CD4-positive, alpha-beta T cell (primary cell): ENCODE measurements at regions of chr4 and their contacts with region 1.

Region 1: DNA sequence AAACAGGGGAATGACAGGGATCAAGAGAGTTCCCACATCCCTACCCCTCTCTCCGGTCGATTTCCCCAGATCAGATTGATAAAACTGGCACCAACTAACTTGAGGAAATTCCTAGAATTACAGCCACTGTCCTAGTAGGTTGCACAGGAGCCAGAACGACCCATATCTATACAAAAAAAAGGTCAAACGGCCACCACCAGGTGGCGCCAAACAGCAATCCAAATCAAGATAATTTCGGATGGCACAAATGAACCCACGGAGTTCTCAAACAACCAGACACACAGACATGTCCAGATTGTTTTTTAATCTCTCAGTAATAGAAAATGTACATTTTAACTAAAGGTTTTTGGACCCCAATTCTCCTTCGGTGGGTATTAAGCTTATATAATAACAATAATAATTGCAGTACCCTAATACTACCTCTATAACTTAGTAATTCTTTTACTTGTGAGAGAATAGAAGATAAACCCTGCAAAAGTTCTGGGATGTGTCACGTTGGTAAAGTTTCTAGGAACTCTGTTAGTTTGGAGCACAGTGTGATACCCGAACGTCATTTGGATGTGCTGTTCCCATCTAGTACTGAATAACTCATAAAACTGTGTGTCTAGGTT is 212.6 kb downstream of the SPOCK3 start:
- DNase-seq: peak in 13 of 14 experiments; percentile 0 to 65 (median 34)
- ATAC-seq: no peak
- H3K4me3 ChIP-seq: no peak overlapping the region
- H3K4me3 Mint-ChIP-seq: no peak overlapping the region
- H3K27ac ChIP-seq: no peak overlapping the region
- H3K27ac Mint-ChIP-seq: no peak overlapping the region
- H3K4me1 ChIP-seq: no peaks in the 10 kb centered on the region
- H3K4me1 Mint-ChIP-seq: no peaks in the 10 kb centered on the region
- H3K27me3 ChIP-seq: no peaks in the 10 kb centered on the region
- H3K27me3 Mint-ChIP-seq: no peaks in the 10 kb centered on the region
- CTCF ChIP-seq: peak; percentile 77

Region 2: GRCh38 chr4:168076989-168077725 is 1055.5 kb after region 1 on chr4:
- CTCF ChIA-PET with region 1: no interaction called
- POLR2A ChIA-PET with region 1: no interaction called
- intact Hi-C with region 1: loop called (anchors 5 to 10 kb)
- DNase-seq: peak in 7 of 14 experiments; percentile 1 to 32 (median 14)
- ATAC-seq: no peak
- H3K4me3 ChIP-seq: no peak overlapping the region
- H3K4me3 Mint-ChIP-seq: no peak overlapping the region
- H3K27ac ChIP-seq: no peak overlapping the region
- H3K27ac Mint-ChIP-seq: no peak overlapping the region
- H3K4me1 ChIP-seq: no peaks in the 10 kb centered on the region
- H3K4me1 Mint-ChIP-seq: no peaks in the 10 kb centered on the region
- H3K27me3 ChIP-seq: no peaks in the 10 kb centered on the region
- H3K27me3 Mint-ChIP-seq: peaks cover 4% of the 10 kb centered on the region
- CTCF ChIP-seq: peak; percentile 59

Region 3: DNA sequence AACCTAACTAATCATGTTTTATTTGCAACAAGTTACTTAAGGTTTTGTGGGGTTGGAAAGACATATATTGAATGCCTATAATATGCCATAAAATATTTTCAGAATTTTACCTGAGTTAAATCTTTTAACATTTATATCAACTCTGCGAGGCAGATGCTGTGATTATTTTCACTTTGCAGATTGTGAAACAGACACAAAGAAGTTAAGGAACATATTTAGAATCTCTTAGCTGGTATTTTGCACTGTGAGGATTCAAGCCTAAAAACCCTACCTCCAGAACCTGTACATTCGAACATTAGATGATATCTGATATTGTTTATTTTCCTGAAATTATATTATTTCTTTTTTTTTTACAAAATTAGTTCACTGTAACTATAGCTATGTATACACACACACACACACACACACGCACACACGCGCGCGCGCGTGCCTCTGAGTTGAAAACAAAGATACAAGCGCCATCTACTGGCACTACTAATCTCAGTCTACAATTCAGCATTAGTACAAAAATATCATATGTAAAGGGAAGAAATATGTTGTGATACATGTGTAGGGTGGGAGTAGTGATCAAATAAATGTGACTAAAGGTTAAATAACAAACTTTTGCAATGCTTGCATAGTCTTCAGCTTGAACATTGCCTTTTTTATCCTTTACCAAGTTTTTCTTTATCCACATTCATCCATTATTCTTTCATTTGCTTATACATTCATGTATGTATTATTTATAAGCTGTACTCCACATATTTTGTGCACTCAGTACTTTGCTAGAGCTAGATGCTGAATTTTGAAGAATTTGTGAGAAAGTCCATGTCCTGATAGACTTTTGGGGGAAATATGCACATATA is 1132.2 kb after region 1 on chr4:
- CTCF ChIA-PET with region 1: no interaction called
- POLR2A ChIA-PET with region 1: no interaction called
- intact Hi-C with region 1: loop called in 1 of 2 experiments (anchors 5 kb)
- DNase-seq: peak; percentile 28 to 72 (median 55)
- ATAC-seq: peak; percentile 49
- H3K4me3 ChIP-seq: no peak overlapping the region
- H3K4me3 Mint-ChIP-seq: no peak overlapping the region
- H3K27ac ChIP-seq: no peak overlapping the region
- H3K27ac Mint-ChIP-seq: no peak overlapping the region
- H3K4me1 ChIP-seq: no peaks in the 10 kb centered on the region
- H3K4me1 Mint-ChIP-seq: peaks cover 9% of the 10 kb centered on the region
- H3K27me3 ChIP-seq: no peaks in the 10 kb centered on the region
- H3K27me3 Mint-ChIP-seq: no peaks in the 10 kb centered on the region
- CTCF ChIP-seq: peak; percentile 81

Region 4: GRCh38 chr4:168551945-168552695 is 1530.5 kb after region 1 on chr4:
- CTCF ChIA-PET with region 1: no interaction called
- POLR2A ChIA-PET with region 1: no interaction called
- intact Hi-C with region 1: loop called in 1 of 2 experiments (anchors 5 kb)
- DNase-seq: peak in 6 of 14 experiments; percentile 1 to 47 (median 20)
- ATAC-seq: peak; percentile 68
- H3K4me3 ChIP-seq: no peak overlapping the region
- H3K4me3 Mint-ChIP-seq: no peak overlapping the region
- H3K27ac ChIP-seq: no peak overlapping the region
- H3K27ac Mint-ChIP-seq: no peak overlapping the region
- H3K4me1 ChIP-seq: no peaks in the 10 kb centered on the region
- H3K4me1 Mint-ChIP-seq: no peaks in the 10 kb centered on the region
- H3K27me3 ChIP-seq: no peaks in the 10 kb centered on the region
- H3K27me3 Mint-ChIP-seq: peaks cover 5% of the 10 kb centered on the region
- CTCF ChIP-seq: no peak